Activated CD8-positive, alpha-beta T cell treated with anti-CD3 and anti-CD28 coated beads for 36 hours (primary cell): ENCODE measurements at regions of chr15 and their contacts with region 1.

Region 1: DNA sequence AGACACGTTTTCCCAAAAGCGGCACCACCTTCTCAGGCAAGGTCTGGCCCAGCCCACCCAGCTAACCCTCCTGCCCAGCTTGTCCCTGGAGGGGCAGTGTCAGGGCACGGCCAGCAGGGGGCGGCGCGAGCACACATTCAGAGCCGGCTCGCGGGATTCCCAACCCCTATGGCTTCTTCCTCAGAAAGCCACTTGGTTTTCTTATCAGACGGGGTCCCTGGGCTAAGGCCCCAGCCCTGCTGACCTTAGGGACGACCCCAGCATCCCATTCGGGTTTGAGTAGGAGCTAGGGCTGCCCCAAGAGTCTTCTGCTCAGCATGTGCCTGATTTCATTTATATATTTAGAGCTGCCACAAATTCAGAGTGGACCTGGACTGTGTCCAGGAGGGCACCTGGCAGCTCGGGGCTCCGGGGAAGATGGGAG is 14.5 kb downstream of the RLBP1 start:
- DNase-seq: peak; percentile 81
- ATAC-seq: peak; percentile 79
- H3K4me3 Mint-ChIP-seq: no peak overlapping the region
- H3K27ac Mint-ChIP-seq: no peak overlapping the region
- H3K4me1 Mint-ChIP-seq: peaks cover 31% of the 10 kb centered on the region
- H3K27me3 Mint-ChIP-seq: no peaks in the 10 kb centered on the region
- CTCF ChIP-seq: peak; percentile 99

Region 2: GRCh38 chr15:89057504-89058133 is 149.3 kb before region 1 on chr15:
- CTCF ChIA-PET with region 1: interaction called, 10 read pairs
- POLR2A ChIA-PET with region 1: no interaction called
- intact Hi-C with region 1: no loop called
- DNase-seq: peak; percentile 85
- ATAC-seq: peak; percentile 96
- H3K4me3 Mint-ChIP-seq: no peak overlapping the region
- H3K27ac Mint-ChIP-seq: no peak overlapping the region
- H3K4me1 Mint-ChIP-seq: peaks cover 7% of the 10 kb centered on the region
- H3K27me3 Mint-ChIP-seq: peaks cover 1% of the 10 kb centered on the region
- CTCF ChIP-seq: peak; percentile 98

Region 3: DNA sequence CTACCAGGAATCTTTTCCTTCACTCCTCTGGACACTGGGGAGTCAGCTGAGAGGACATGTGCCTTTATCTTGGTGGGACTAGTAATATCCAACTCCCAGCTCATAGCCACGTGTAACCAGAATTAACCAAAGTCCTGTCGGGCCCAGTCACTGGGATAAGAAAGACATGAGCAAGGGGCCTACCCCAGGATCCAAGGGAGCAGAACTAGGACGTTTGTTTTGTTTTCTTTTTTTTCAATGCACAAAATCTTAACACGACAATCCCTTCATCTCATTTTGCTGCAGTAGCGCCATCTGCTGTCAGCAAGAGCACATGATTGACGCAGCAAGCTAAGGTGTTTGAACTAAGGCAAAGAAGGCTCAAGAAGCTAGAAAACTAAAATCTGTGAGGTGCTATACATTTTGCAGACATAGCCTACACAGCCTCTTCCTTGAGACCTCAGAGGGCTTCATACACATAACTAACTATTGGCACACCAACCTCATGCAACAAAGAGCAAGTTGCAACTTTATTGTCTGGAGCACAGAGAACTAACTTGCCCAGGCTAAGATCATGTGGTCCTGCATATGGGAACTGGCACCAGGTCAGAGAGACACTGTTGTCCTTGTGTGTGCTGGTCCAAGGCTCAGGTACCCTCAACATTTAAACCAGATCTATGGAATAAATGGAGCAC is 29.1 kb before region 1 on chr15:
- CTCF ChIA-PET with region 1: interaction called, 11 read pairs
- POLR2A ChIA-PET with region 1: no interaction called
- intact Hi-C with region 1: no loop called
- DNase-seq: peak; percentile 78
- ATAC-seq: peak; percentile 35
- H3K4me3 Mint-ChIP-seq: no peak overlapping the region
- H3K27ac Mint-ChIP-seq: peak overlapping the region; percentile 36
- H3K4me1 Mint-ChIP-seq: peaks cover 35% of the 10 kb centered on the region
- H3K27me3 Mint-ChIP-seq: no peaks in the 10 kb centered on the region
- CTCF ChIP-seq: peak; percentile 83

Region 4: GRCh38 chr15:89230277-89230676 is 23.4 kb after region 1 on chr15:
- CTCF ChIA-PET with region 1: interaction called, 42 read pairs
- POLR2A ChIA-PET with region 1: interaction called, 3 read pairs
- intact Hi-C with region 1: no loop called
- DNase-seq: no peak
- ATAC-seq: no peak
- H3K4me3 Mint-ChIP-seq: no peak overlapping the region
- H3K27ac Mint-ChIP-seq: no peak overlapping the region
- H3K4me1 Mint-ChIP-seq: peaks cover 5% of the 10 kb centered on the region
- H3K27me3 Mint-ChIP-seq: peaks cover 13% of the 10 kb centered on the region
- CTCF ChIP-seq: no peak

Region 5: DNA sequence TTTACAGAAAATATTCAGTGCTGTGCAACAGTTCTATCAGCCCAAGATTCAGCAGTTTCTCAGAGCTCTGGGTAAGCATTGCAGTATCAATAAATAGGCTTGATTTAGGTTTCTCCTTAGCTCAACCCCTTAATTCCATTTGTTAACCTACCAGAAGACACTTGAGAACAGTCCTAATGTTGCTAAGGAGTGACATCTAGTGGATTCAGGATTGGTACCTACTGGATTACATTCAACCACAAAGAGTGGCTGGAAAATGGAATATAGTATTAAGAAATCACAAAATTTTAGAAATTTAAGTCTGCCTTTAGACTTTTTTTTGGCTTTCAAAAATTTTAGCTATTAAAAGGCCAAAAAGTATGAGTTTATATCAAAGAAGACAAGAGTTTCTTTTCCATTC is 93.0 kb after region 1 on chr15:
- CTCF ChIA-PET with region 1: interaction called, 17 read pairs
- POLR2A ChIA-PET with region 1: no interaction called
- intact Hi-C with region 1: no loop called
- DNase-seq: no peak
- ATAC-seq: no peak
- H3K4me3 Mint-ChIP-seq: no peak overlapping the region
- H3K27ac Mint-ChIP-seq: no peak overlapping the region
- H3K4me1 Mint-ChIP-seq: peaks cover 14% of the 10 kb centered on the region
- H3K27me3 Mint-ChIP-seq: no peaks in the 10 kb centered on the region
- CTCF ChIP-seq: no peak

Region 6: DNA sequence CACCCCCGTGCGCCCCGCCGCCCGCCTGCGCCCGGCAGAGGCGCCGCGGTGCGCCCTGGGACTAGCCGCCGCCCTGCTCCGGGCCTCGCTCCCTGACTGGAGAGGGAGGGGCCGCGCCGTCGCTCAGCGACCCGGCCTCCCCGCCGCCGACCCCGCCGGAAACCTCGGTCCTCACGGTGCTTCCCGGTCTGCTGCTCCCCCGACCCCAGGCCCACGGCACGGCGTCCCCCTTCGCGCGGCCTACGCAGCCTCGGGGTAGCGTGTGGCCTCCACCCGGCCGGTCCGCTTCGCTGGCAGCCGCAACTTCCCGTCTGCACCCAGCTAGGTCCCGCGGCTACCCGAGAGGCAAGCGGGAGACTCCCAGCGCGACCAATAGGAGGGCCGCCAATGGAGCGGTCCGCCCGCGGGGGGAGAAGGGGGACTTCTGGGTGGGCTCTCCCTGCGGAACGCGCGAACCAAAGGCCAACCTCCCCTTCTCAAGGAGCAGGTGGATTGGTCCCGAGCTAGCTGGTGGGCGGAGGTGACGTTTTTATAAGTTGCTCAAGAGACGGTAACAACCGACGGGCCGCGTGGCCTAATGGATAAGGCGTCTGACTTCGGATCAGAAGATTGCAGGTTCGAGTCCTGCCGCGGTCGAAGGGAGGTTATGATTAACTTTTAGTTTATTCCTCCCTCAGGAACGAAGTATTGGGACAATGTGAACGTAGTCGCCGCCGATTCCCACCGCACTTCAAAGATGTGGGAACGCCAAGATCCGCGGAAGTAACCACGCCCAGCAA is 127.8 kb after region 1 on chr15 and contains the start of gene POLG:
- CTCF ChIA-PET with region 1: interaction called, 34 read pairs
- POLR2A ChIA-PET with region 1: no interaction called
- intact Hi-C with region 1: no loop called
- DNase-seq: peak; percentile 98
- ATAC-seq: peak; percentile 93
- H3K4me3 Mint-ChIP-seq: peak within 1 kb of the TSS; percentile 78
- H3K27ac Mint-ChIP-seq: peak within 1 kb of the TSS; percentile 80
- H3K4me1 Mint-ChIP-seq: peaks cover 60% of the 10 kb centered on the region
- H3K27me3 Mint-ChIP-seq: peaks cover 2% of the 10 kb centered on the region
- CTCF ChIP-seq: no peak
- total RNA-seq, gene POLG: 101 to 106 TPM